Adrenal gland (tissue), 19 donors: ENCODE measurements at regions of chr10 and their contacts with region 1.

Region 1: DNA sequence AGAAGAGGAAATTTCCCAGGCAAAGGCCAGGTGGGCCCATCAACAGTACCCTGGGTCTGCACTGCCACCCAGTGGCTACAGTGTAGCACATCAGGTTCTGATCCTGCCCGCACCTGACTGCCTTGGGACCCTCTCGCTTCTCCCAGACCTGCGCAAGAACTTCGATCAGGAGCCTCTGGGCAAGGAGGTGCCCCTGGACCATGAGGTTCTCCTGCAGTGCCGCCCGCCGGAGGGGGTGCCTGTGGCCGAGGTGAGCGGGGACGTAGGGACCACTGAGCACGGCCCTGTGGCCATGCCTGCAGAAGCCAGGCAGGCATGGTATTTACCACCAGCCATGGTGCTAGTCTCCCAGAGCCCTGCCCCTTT is 33.9 kb upstream of the SLC29A3 start:
- DNase-seq: peak in 6 of 7 donors; percentile 33 to 73 (median 54)
- H3K4me3 ChIP-seq: no peak overlapping the region
- H3K27ac ChIP-seq: no peak overlapping the region
- H3K4me1 ChIP-seq: no peaks in the 10 kb centered on the region
- H3K27me3 ChIP-seq: no peaks in the 10 kb centered on the region
- CTCF ChIP-seq: peak; percentile 59 to 89 (median 78)
- POLR2A ChIP-seq: no peak

Region 2: GRCh38 chr10:70905101-70906042 is 379.8 kb before region 1 on chr10:
- intact Hi-C with region 1: loop called in 1 of 2 experiments (anchors 2 kb)
- DNase-seq: no peak
- H3K4me3 ChIP-seq: no peak overlapping the region
- H3K27ac ChIP-seq: no peak overlapping the region
- H3K4me1 ChIP-seq: no peaks in the 10 kb centered on the region
- H3K27me3 ChIP-seq: no peaks in the 10 kb centered on the region
- CTCF ChIP-seq: no peak
- POLR2A ChIP-seq: no peak

Region 3: DNA sequence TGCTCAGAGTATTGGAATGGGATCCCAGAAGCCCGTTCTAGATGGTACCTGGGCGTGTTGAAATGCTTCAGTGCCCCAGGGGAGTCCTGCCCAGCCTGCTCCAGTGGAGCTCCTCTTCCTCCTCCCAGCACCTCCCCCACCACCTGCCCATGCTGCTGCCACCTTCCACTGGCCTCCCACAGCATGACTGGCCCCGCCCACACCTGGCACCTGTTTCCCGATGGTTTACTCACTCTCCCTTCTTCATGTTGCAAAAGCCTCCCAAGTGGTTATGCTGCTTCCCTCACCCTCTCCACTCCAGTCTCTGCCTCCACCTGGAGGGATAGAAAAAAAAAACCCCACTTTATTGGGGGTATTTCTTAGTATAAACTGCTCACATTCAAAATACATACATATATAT is 364.6 kb before region 1 on chr10:
- intact Hi-C with region 1: loop called (anchors 2 to 5 kb)
- DNase-seq: no peak
- H3K4me3 ChIP-seq: no peak overlapping the region
- H3K27ac ChIP-seq: no peak overlapping the region
- H3K4me1 ChIP-seq: no peaks in the 10 kb centered on the region
- H3K27me3 ChIP-seq: peaks cover 9% of the 10 kb centered on the region
- CTCF ChIP-seq: no peak
- POLR2A ChIP-seq: no peak

Region 4: DNA sequence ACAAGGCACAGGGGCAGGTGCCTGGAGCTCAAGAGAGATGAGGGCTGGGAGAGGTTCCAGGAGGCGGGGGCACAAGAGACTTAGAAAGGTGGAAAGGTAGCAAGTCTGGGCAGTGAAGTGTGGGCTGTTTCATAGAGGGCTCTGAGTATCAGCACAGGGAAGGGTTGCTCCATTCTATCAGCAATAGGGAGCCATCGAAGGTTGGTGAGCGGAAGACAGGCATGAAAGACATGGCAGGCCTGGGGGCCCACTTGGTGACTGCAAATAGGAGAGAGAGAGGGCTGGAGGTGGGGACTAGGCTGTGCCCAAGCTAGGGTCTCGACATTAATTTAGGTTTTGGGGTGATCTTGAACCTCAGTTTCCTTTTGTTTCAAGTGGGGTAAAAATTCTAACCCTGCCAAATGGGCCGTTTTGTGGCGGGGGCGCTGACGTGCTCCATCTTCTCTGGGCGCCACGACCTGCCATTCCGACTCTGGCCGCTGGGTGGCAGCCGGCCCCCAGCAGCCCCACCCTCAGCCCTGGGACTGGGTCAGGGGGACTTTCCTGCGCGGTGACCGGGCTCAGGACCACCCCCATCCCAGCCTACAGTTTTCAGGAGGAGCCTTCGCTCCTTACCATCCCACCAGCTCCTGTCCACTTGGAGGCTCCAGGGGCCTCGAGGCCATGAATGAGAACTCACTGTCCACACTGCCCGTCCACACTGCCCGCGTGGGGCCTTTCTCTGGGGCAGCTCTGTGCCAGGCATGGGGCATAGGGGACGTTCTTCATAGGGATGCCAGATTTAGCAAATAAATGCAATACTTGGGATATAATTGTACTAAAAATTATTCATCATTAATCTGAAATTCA is 359.6 kb before region 1 on chr10:
- intact Hi-C with region 1: loop called (anchors 2 to 5 kb)
- DNase-seq: peak in 6 of 7 donors; percentile 34 to 60 (median 44)
- H3K4me3 ChIP-seq: no peak overlapping the region
- H3K27ac ChIP-seq: no peak overlapping the region
- H3K4me1 ChIP-seq: no peaks in the 10 kb centered on the region
- H3K27me3 ChIP-seq: peaks cover 9% of the 10 kb centered on the region
- CTCF ChIP-seq: peak; percentile 76 to 96 (median 90)
- POLR2A ChIP-seq: no peak